HEK293T (cell line): ENCODE measurements at regions of chr7 and their contacts with region 1.

Region 1: GRCh38 chr7:135662373-135663114 is at the start of gene STMP1:
- DNase-seq: peak; percentile 99

Region 2: GRCh38 chr7:135645296-135645904 is 17.1 kb before region 1 on chr7:
- CTCF ChIA-PET with region 1: interaction called, 11 read pairs
- POLR2A ChIA-PET with region 1: interaction called, 13 read pairs
- DNase-seq: peak; percentile 61

Region 3: GRCh38 chr7:135650831-135651573 is 11.5 kb before region 1 on chr7:
- CTCF ChIA-PET with region 1: interaction called, 11 read pairs
- POLR2A ChIA-PET with region 1: interaction called, 13 read pairs
- DNase-seq: no peak

Region 4: GRCh38 chr7:135672560-135673359 is 10.2 kb after region 1 on chr7:
- CTCF ChIA-PET with region 1: interaction called, 19 read pairs
- POLR2A ChIA-PET with region 1: interaction called, 14 read pairs
- DNase-seq: peak; percentile 81

Region 5: GRCh38 chr7:135710417-135711138 is 48.0 kb after region 1 on chr7:
- CTCF ChIA-PET with region 1: interaction called, 12 read pairs
- POLR2A ChIA-PET with region 1: interaction called, 12 read pairs
- DNase-seq: peak; percentile 85

Region 6: GRCh38 chr7:136150311-136150710 is 487.8 kb after region 1 on chr7:
- CTCF ChIA-PET with region 1: no interaction called
- POLR2A ChIA-PET with region 1: no interaction called
- DNase-seq: no peak

Region 7: GRCh38 chr7:137592232-137592896 is 1929.8 kb after region 1 on chr7:
- CTCF ChIA-PET with region 1: interaction called, 11 read pairs
- POLR2A ChIA-PET with region 1: no interaction called
- DNase-seq: peak; percentile 79